Activated CD8-positive, alpha-beta memory T cell treated with anti-CD3 and anti-CD28 coated beads, Interleukin-2, amount 10 ng/mL, durations not matched to agents 7 days and 5 days (primary cell): ENCODE measurements at regions of chr1 and their contacts with region 1.

Region 1: GRCh38 chr1:116817582-116818064 is 63.4 kb downstream of the CD2 start:
- DNase-seq: peak; percentile 87
- ATAC-seq: peak; percentile 76
- H3K4me3 Mint-ChIP-seq: peak overlapping the region; percentile 33
- H3K27ac Mint-ChIP-seq: peak overlapping the region; percentile 81
- H3K4me1 Mint-ChIP-seq: peaks cover 65% of the 10 kb centered on the region
- H3K27me3 Mint-ChIP-seq: no peaks in the 10 kb centered on the region

Region 2: GRCh38 chr1:116754198-116754977 is 63.2 kb before region 1 on chr1 and contains the start of gene CD2:
- CTCF ChIA-PET with region 1: interaction called, 22 read pairs
- DNase-seq: peak; percentile 82
- ATAC-seq: peak; percentile 79
- H3K4me3 Mint-ChIP-seq: peak within 1 kb of the TSS; percentile 97
- H3K27ac Mint-ChIP-seq: peak within 1 kb of the TSS; percentile 98
- H3K4me1 Mint-ChIP-seq: peaks cover 37% of the 10 kb centered on the region
- H3K27me3 Mint-ChIP-seq: no peaks in the 10 kb centered on the region
- total RNA-seq, gene CD2: 278 to 444 TPM

Region 3: DNA sequence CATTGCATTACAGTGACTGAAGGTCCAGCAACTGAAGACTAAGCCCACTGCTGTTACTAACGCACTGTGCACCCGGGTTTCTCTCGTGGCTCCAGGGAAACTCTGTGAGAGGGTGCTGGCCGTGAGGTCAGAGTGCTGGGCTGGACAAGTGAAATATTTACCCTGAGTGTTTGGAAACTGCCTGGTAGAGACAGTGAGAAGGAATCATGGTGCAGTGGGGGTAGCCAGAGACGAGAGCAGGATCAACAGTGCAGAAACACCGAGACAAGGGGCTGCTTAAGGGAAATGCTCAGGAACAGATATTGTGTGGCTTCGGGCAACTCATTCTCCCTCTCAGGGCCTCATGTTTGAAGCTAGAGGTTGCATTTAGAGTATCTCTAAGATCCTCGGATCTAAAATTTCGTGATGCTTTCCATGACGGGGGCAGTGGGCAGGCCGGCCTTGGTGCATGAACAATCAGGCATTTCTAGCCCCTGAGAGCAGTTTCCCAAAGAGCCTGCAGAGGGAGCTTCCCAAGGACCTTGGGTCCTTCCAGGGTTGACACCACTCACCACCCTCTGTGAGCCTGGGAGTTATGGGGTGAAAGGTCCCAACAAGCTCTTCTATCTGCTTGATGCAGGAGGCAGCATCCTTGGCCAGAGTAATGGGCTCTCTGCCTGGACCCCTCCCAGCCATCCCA is 53.7 kb before region 1 on chr1:
- CTCF ChIA-PET with region 1: interaction called, 150 read pairs
- DNase-seq: peak; percentile 83
- ATAC-seq: peak; percentile 20
- H3K4me3 Mint-ChIP-seq: peak overlapping the region; percentile 65
- H3K27ac Mint-ChIP-seq: peak overlapping the region; percentile 97
- H3K4me1 Mint-ChIP-seq: peaks cover 96% of the 10 kb centered on the region
- H3K27me3 Mint-ChIP-seq: no peaks in the 10 kb centered on the region

Region 4: GRCh38 chr1:116806245-116806644 is 11.4 kb before region 1 on chr1:
- CTCF ChIA-PET with region 1: interaction called, 17 read pairs
- DNase-seq: peak; percentile 81
- ATAC-seq: peak; percentile 34
- H3K4me3 Mint-ChIP-seq: peak overlapping the region; percentile 80
- H3K27ac Mint-ChIP-seq: peak overlapping the region; percentile 97
- H3K4me1 Mint-ChIP-seq: peaks cover 85% of the 10 kb centered on the region
- H3K27me3 Mint-ChIP-seq: no peaks in the 10 kb centered on the region

Region 5: GRCh38 chr1:116847688-116848531 is 30.3 kb after region 1 on chr1:
- CTCF ChIA-PET with region 1: no interaction called
- DNase-seq: peak; percentile 45
- ATAC-seq: peak; percentile 97
- H3K4me3 Mint-ChIP-seq: no peak overlapping the region
- H3K27ac Mint-ChIP-seq: no peak overlapping the region
- H3K4me1 Mint-ChIP-seq: peaks cover 19% of the 10 kb centered on the region
- H3K27me3 Mint-ChIP-seq: no peaks in the 10 kb centered on the region

Region 6: DNA sequence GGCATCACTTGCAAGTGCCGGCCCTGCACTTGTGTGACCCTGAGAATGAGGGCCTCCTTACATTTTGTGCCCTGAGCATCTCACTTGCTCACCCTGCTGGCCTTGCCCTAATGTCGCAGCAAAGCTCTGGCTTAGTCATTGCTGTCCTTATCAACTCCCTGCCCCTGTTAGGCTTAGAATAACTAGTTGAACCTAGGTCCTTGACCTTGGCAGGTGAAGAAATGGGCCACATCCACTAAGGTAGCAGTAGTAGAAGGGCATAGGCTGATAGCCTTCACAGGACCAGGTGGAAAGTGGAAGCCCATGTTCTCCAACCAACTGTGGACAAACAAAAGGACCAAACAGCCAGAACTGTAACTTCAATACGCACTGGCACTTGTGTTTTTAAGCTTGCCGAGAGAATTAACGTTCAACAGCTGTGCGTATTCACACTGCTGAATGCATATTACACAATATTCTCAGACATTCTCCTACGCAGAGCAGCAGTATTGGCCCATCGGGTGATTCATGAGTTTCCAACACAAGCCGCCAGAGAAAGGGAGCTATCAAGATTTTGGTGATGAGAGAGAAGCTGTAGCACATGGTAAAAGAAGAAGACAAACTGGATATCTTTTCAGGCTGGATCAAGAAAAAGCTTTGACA is 64.4 kb after region 1 on chr1:
- CTCF ChIA-PET with region 1: interaction called, 10 read pairs
- DNase-seq: peak; percentile 66
- ATAC-seq: peak; percentile 76
- H3K4me3 Mint-ChIP-seq: no peak overlapping the region
- H3K27ac Mint-ChIP-seq: no peak overlapping the region
- H3K4me1 Mint-ChIP-seq: peaks cover 7% of the 10 kb centered on the region
- H3K27me3 Mint-ChIP-seq: no peaks in the 10 kb centered on the region